ENCODE measurements at regions of chr1 and their contacts with region 1.

Region 1: DNA sequence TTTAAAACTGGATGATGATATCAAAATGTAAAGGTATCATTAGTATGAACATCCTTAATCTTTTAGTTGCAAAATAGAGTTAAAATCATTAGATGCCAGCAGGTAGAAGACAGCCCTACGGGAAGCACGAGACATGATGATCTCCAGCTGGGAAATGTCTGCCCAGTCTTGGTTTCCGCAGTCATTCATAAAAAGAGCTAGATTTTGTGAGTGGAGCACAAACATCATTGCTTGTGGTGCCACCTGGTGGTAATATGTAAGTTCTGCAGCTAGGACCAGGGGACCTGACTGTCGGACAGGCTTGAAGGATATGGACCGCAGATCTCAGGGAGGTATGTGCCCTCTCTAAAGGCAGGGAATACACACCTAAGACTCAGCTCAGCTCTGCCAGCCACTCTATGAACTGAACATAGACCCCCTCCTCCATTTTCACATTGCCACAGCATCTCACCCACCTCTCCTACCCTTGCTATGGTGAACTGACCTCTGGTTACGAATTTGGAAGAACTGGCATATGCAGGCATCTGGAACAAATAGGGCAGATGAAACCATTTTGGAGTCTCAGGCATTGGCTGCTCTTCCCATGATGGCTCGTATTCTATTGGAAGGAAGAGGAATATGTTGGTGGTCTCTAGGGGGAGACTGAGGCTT is 9.2 kb downstream of the FCMR start:
- DNase-seq: no peak

Region 2: GRCh38 chr1:206489980-206490770 is 422.4 kb before region 1 on chr1:
- intact Hi-C with region 1: loop called (anchors 5 kb)
- DNase-seq: peak; percentile 88

Region 3: GRCh38 chr1:206608108-206608698 is 304.4 kb before region 1 on chr1:
- intact Hi-C with region 1: loop called (anchors 2 kb)
- DNase-seq: no peak

Region 4: GRCh38 chr1:206635080-206635977 is 277.2 kb before region 1 on chr1 and contains the start of gene DYRK3:
- intact Hi-C with region 1: loop called (anchors 2 kb)
- DNase-seq: peak; percentile 98
- total RNA-seq, gene DYRK3: 11.3 TPM

Region 5: DNA sequence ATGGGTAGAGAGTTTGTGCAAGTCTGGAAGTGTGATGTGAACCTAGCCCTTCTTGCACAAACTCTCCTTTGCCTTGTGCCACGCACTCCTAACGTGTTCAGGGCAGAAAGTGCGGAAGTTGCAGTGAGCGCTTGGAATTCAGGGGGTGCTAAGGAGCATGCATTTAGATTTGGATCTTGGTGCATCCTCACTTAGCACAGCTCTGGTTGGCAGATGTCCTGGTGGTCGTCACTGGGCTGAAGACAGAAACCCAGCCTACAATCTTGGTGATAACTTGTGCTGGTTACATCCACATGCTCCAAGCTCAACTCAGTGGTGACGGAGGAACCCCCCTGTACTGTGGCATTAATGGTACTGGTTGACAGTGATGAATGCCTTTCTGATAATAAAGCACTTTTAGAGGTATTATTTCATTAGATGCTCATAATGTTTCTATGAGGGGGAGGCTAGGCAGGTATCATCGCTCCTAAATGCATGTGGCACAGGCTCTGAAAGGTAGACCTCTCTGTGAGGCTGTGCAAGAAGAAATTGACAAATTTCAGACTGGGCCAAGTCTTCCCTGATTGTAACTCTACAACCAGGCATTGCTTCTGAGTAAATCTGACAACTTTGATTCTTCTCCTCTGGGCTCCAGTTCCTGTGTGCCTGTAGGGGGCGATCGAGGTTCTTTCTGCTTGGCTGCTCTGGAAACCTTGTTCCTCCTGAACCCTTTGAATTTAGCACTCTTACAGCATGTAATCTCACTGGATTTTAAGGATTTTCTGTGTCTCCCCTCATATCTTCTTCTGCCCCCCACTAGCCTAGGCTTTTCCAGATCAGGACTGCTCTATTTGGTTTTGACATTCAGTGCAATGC is 187.2 kb before region 1 on chr1:
- intact Hi-C with region 1: loop called (anchors 1 kb)
- DNase-seq: no peak

Region 6: DNA sequence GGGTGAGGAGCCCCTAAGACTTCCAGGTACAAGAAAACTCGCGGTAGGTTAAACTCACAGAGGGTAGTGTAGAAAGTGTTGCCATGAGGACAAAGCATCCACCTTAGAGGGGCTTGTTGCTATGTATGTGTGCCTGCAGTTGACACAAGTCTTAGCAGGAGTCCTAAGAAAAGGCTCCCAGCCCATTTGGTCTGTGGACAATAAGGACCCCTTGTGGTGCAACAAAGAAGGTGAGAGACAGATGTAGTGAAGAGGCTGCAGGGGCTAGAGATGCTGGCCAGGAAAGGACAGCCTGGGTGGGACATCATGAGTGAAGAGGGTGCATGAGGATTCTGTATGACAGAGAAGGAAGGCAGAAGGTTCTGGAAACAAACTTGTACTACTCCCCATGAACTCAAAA is 104.0 kb before region 1 on chr1:
- intact Hi-C with region 1: loop called (anchors 2 kb)
- DNase-seq: no peak

Region 7: DNA sequence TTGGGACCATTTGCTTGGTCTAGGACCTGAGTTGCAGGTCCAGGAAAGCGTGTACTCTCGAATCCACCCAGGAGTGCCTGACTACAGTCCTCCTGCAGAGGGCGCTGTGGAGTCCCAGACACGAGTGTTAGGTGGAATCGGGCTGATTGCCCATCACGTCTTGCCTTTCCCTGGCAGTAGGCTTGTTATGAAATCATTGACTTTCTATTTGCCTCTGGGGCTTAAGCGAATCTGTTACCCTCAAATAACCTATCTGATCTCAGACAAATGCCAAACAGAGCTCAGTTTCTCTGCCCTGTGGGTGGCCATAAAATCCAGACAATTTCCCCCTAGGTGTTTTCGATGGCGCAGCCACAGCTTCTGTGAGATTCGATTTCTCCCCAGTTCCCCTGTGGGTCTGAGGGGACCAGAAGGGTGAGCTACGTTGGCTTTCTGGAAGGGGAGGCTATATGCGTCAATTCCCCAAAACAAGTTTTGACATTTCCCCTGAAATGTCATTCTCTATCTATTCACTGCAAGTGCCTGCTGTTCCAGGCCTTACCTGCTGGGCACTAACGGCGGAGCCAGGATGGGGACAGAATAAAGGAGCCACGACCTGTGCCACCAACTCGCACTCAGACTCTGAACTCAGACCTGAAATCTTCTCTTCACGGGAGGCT is 47.4 kb before region 1 on chr1 and contains the start of gene IL20:
- intact Hi-C with region 1: loop called (anchors 2 kb)
- DNase-seq: peak; percentile 85
- total RNA-seq, gene IL20: not detected

Region 8: DNA sequence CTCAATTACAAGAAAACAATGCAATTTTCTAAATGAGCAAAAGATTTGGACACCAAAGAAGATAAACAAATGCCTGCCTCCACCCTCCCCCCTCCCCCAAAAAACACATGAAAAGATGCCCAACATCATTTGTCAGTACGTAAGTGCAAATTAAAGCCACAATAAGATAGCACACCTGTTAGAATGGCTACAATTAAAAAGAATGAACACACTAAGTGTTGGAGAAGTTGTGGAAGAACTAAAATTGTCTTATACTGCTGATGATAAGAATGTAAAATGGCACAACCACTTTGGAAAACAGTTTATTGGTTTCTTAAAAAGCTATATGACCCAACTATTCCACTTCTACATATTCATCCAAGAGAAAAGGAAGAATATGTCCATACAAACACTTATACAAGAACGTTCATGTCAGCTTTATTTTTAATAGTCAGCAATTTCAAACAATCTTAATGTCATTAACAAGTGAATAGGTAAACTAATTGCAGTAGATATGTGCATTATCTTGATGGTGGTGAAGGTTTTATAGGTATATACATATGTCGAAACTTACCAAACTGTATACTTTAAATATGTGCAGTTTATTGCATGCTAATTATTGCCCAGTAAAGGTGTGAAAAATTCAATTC is 36.7 kb before region 1 on chr1:
- intact Hi-C with region 1: no loop called
- DNase-seq: no peak

Region 9: DNA sequence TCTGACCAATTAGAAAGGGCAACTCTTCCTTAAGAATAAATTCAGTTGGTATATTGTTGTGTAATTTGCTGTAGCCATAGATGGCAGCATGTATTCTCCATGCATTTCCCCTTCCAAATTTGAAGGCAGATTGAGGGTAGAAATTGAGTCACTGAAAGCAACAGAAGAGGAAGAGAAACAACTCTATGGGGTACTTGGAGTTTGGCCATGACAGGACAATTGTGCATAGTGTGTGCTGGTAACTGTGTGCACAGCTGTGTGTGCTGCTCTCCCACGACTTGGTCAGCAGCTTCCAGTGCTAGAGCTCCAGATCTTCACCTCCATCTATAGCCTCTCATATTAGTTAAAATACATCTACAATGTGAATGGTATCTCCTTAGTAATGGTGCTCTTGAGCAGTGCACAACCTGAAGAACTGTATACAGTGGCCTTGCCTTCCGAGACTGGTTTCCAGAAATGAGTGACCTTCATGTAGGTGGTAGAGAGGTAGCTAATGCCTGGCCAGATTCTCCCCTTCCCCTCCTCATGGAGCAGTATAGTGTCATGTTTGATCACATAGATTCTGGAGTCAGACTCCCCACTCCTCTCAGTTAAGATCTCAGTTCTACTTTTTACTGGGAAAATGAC is 58.6 kb after region 1 on chr1:
- intact Hi-C with region 1: no loop called
- DNase-seq: no peak

Measured in cardiac septum (tissue), 1 donor.